ENCODE measurements at regions of chr19 and their contacts with region 1.

Region 1: DNA sequence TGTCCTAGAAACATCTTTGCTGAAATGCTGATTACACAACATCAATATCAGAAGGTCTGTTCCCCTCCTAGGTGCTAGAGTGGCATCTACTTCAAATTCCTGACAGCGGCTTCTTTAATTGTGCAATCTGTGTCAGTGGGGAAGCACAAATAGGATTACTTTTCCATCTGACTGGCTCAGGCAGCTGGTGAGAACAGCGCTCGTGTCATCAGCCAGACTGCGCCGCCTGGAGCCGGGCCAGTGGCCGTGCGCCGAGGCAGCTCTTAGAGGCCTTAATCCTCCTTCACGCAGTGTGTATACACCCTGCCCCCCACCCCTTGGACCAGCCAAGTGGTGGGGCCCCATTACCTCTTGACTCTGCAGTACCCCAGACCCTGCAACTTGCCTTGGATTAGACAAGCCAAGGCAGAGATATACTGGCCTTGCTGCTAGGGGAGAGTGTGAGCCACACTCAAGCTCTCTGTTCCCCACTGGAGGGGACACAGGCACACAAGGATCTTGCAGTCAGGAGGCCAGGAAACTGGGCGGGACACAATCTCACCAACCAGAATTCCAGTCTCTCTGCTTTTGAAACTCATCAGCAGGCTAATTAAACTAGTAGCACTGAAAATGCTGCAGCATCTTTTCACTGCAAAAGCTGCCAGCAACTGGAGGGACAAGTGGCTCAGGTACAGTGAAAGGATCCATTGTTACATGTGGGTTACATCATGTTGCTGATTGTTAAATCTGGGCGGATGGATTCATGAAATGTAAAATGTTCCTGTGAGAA is 48.9 kb upstream of the EPHX3 start:
- DNase-seq: peak; percentile 97
- H3K4me3 ChIP-seq: peak overlapping the region in 2 of 4 donors; percentile 2
- H3K27ac ChIP-seq: peak overlapping the region; percentile 68 to 84 (median 80)
- H3K4me1 ChIP-seq: peaks cover 97 to 100% (median 100%) of the 10 kb centered on the region in 4 donors
- H3K27me3 ChIP-seq: no peaks in the 10 kb centered on the region
- CTCF ChIP-seq: peak in 1 of 3 experiments; percentile 28
- EP300 ChIP-seq: no peak
- POLR2A ChIP-seq: no peak

Region 2: GRCh38 chr19:15307169-15307568 is 26.1 kb after region 1 on chr19:
- intact Hi-C with region 1: no loop called
- DNase-seq: no peak
- H3K4me3 ChIP-seq: no peak overlapping the region
- H3K27ac ChIP-seq: no peak overlapping the region
- H3K4me1 ChIP-seq: peaks cover 75 to 98% (median 91%) of the 10 kb centered on the region in 4 donors
- H3K27me3 ChIP-seq: no peaks in the 10 kb centered on the region
- CTCF ChIP-seq: no peak
- EP300 ChIP-seq: no peak
- POLR2A ChIP-seq: no peak

Region 3: DNA sequence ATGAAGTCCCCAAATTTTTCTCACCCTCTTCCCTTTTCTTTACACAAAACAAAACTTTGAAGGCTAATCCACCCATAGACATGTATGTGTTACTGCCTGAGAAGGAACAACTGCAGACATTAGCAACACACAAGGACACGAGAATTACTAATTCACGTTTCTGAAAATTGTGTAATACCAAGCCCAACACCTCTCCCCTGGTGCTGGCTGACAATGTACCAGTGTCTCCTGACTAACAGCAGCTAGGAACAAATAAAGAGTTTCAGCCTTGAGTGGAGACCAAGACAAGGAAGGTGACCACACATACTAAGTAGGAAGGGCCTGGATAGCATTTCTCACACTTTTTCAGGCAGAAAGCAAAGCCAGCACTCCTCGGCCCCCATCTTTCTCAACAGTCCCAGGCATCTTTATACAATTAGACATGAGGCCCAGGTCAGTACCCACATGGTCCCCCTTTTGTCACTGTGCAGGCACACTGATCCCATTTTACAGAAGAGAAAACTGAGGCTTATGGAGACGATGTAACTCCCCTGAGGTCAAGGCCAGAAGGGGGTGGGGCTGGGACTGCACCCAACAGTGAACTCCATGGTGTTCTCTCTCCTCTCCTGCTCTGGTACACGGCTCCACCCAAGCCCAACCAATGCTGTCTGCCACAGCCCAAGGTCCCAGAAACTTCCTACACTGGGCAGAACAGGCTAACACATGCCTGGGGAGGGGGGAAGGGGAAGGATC is 42.6 kb after region 1 on chr19:
- intact Hi-C with region 1: loop called (anchors 5 kb)
- DNase-seq: no peak
- H3K4me3 ChIP-seq: peak overlapping the region in 1 of 4 donors; percentile 3
- H3K27ac ChIP-seq: peak overlapping the region; percentile 66 to 79 (median 74)
- H3K4me1 ChIP-seq: peaks cover 94 to 100% (median 100%) of the 10 kb centered on the region in 4 donors
- H3K27me3 ChIP-seq: no peaks in the 10 kb centered on the region
- CTCF ChIP-seq: no peak
- EP300 ChIP-seq: no peak
- POLR2A ChIP-seq: no peak

Region 4: GRCh38 chr19:15432629-15433518 is 151.8 kb after region 1 on chr19:
- intact Hi-C with region 1: no loop called
- DNase-seq: no peak
- H3K4me3 ChIP-seq: peak overlapping the region; percentile 91 to 97 (median 92)
- H3K27ac ChIP-seq: peak overlapping the region; percentile 88 to 97 (median 95)
- H3K4me1 ChIP-seq: peaks cover 40 to 73% (median 64%) of the 10 kb centered on the region in 4 donors
- H3K27me3 ChIP-seq: no peaks in the 10 kb centered on the region
- CTCF ChIP-seq: no peak
- EP300 ChIP-seq: no peak
- POLR2A ChIP-seq: no peak

Measured in esophagus muscularis mucosa (tissue), 4 donors.